Endothelial cell of umbilical vein (primary cell): ENCODE measurements at regions of chr9 and their contacts with region 1.

Region 1: DNA sequence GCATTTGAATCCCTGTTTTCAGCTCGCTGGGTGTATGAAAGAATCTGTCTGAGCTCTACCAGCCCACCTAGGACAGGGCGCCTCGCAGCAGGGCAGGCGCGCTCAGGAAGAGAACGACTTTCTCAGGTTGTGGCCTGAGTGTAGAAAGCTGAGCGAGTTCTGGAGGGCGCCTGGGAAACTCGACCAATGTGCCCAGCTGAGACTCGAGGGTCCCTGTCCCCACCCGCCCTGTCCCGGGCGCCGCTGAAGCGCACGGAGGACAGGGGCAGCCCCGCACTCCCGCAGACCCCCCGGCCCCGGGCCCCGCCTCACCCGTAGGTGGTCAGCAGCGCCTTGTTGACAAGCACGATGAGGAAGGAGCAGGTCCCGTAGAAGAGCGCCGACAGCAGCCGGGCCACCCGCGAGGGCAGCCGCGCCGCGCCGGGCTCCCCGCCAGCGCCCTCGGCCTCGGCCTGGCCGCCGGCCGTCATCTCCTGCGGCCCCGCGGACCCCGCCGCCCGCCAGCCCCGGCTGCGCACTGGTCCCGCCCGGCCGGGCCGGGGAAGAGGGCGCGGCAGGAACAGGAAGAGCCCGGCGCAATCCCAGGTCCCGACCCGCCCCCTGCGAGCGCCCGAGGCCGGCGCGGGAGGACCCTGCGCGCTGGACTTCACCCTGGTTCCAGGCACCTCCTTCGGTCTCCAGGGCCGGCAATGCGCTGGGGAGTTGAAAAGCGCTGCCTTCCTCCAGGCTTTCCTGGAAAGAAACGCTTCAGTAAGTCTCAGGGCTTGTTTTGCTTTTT is at the start of gene SLC35D2:
- DNase-seq: peak; percentile 57
- H3K4me3 ChIP-seq: peak within 1 kb of the TSS; percentile 68 to 83 (median 69)
- H3K27ac ChIP-seq: peak within 1 kb of the TSS; percentile 66
- H3K4me1 ChIP-seq: peaks cover 18% of the 10 kb centered on the region
- H3K27me3 ChIP-seq: no peaks in the 10 kb centered on the region
- CTCF ChIP-seq: no peak
- POLR2A ChIP-seq: peak; percentile 68
- total RNA-seq, gene SLC35D2: 28.4 and 29.9 TPM in 2 replicates

Region 2: DNA sequence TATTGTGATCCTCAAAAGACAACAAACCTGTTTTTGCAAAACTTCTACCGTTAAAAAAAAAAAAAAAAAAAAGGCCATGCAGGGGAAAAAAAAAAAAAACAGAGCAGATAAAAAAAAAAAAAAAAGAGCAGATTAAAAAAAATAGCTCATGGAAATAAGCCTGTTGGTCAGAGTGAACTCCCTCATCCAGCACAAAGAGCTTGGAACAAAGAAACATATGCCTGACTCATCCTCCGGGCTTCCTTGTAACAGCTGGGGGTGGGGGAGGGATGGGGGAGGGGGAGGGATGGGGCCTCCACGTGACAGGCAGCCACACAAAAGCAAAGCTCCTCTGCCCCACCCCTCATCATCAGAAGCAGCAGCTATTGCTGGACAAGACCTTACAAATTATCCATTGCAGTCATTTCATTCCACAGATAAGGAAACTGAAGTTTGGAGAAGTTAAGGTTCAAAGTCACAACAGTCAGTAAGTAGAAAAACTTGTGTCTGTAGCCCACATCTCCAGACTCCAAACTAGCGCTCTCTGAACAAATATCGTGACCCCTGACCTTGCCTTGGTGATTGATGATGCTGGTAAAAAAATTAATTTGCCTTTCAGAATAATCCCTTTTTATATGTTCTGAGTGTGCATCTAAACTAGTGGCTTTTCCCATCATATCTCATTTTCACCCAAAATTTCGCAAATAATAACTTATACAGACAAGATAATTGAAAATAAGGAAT is 38.7 kb before region 1 on chr9:
- CTCF ChIA-PET with region 1: interaction called, 4 read pairs
- POLR2A ChIA-PET with region 1: no interaction called
- dilution Hi-C with region 1: no loop called
- intact Hi-C with region 1: loop called (anchors 2 kb)
- DNase-seq: peak; percentile 83
- H3K4me3 ChIP-seq: no peak overlapping the region
- H3K27ac ChIP-seq: peak overlapping the region; percentile 51
- H3K4me1 ChIP-seq: peaks cover 18% of the 10 kb centered on the region
- H3K27me3 ChIP-seq: no peaks in the 10 kb centered on the region
- CTCF ChIP-seq: no peak
- POLR2A ChIP-seq: no peak

Region 3: DNA sequence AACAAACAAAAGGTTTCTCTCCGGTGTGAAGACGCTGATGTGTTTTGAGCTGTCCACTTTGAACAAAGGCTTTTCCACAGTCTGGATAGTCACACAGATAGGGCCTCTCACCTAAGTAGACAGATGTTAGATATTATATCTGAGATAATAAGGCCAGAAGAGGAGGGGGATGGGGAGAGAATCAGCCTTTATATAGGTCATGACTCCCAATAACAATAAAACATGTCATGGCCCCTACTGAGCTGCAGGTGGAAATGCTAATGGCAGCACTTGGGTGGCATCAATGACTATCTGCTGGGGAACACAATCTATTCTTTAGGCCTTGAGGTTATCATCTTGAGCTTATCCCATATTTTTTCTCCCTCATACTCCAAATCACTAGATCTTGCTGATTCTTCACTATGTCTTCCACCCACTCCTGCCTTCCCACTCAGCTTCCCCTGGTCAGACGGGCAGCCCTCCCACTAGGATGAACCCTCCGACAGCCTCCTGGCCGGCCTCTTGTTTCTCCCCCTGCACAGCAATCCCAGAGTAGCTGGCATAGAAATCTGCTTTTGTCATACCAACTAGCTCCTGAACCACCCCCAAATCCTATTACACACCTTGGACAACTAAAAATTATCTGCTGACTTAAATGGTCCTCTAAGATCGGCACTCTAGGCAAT is 11.6 kb after region 1 on chr9:
- CTCF ChIA-PET with region 1: interaction called, 10 read pairs
- POLR2A ChIA-PET with region 1: no interaction called
- dilution Hi-C with region 1: no loop called
- intact Hi-C with region 1: no loop called
- DNase-seq: no peak
- H3K4me3 ChIP-seq: no peak overlapping the region
- H3K27ac ChIP-seq: no peak overlapping the region
- H3K4me1 ChIP-seq: peaks cover 9% of the 10 kb centered on the region
- H3K27me3 ChIP-seq: no peaks in the 10 kb centered on the region
- CTCF ChIP-seq: no peak
- POLR2A ChIP-seq: no peak

Region 4: GRCh38 chr9:96449845-96450612 is 66.7 kb after region 1 on chr9 and contains the start of gene HABP4:
- CTCF ChIA-PET with region 1: no interaction called
- POLR2A ChIA-PET with region 1: no interaction called
- dilution Hi-C with region 1: no loop called
- intact Hi-C with region 1: loop called (anchors 2 kb)
- DNase-seq: peak; percentile 93
- H3K4me3 ChIP-seq: peak within 1 kb of the TSS; percentile 50 to 66 (median 63)
- H3K27ac ChIP-seq: peak within 1 kb of the TSS; percentile 65
- H3K4me1 ChIP-seq: peaks cover 7% of the 10 kb centered on the region
- H3K27me3 ChIP-seq: peaks cover 0 to 2% of the 10 kb centered on the region in 2 experiments
- CTCF ChIP-seq: no peak
- POLR2A ChIP-seq: peak; percentile 54
- total RNA-seq, gene HABP4: 11.1 and 11.7 TPM in 2 replicates

Region 5: DNA sequence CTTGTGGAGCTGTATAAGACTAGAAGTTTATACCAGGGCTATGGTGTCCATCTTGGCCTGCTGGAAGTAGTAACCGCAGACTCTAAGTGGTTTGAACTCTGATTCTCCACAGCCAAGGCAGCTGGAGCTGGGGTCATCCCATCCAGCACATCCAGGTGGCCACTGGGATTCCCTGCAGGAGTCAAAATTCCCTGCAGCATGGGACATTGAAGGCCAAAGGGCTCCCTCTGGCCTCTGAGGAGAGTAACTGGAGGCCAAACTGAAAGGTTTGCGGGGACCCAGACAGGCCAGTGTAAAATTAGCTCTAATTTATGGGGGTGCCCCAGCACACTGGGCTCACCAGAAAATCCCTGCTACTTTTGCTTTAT is 284.0 kb after region 1 on chr9:
- CTCF ChIA-PET with region 1: interaction called, 13 read pairs
- POLR2A ChIA-PET with region 1: no interaction called
- dilution Hi-C with region 1: no loop called
- intact Hi-C with region 1: no loop called
- DNase-seq: no peak
- H3K4me3 ChIP-seq: no peak overlapping the region
- H3K27ac ChIP-seq: no peak overlapping the region
- H3K4me1 ChIP-seq: no peaks in the 10 kb centered on the region
- H3K27me3 ChIP-seq: no peaks in the 10 kb centered on the region
- CTCF ChIP-seq: no peak
- POLR2A ChIP-seq: no peak